Caco-2 (cell line): ENCODE measurements at regions of chr4 and their contacts with region 1.

Region 1: DNA sequence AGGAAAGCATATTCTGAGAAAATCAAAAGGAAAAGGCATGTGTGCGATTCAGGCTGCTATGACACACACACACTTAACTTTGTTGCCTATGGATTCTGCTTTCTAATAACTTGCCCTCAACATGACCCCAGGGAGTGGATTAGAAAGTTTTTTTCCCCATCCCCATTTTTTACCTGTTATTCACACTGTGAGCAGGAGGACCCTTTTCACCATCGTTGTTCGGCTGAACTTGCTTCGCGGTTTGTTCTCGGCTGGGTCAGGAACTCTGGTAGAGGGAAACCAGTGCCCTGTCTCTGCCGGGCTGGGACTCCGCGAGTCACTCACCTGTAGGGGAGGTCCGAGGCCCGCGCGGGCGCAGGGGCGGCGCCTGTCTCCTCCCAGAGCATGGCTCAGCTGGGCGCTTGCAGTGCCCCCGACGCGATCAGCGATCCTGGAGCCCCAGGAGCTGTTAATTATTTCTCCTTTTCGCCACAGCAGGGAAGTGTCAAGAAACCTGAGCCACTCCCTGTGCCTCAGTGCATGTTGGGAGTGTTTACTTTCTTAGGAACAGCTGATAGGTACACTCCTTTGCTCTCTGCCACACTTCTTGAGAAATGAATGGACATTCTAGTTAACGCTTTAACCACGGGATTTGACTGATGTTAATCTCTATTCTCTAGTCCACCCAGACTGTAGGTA is at the start of gene RASSF6:
- DNase-seq: peak; percentile 92 to 94
- H3K4me3 ChIP-seq: peak within 1 kb of the TSS; percentile 54
- H3K4me3 Mint-ChIP-seq: peak within 1 kb of the TSS; percentile 82
- H3K27ac Mint-ChIP-seq: peak within 1 kb of the TSS; percentile 79
- H3K4me1 ChIP-seq: no peaks in the 10 kb centered on the region
- H3K4me1 Mint-ChIP-seq: no peaks in the 10 kb centered on the region
- H3K27me3 ChIP-seq: no peaks in the 10 kb centered on the region
- H3K27me3 Mint-ChIP-seq: no peaks in the 10 kb centered on the region
- CTCF ChIP-seq: peak in 1 of 2 experiments; percentile 6
- total RNA-seq, gene RASSF6: 2.4 and 2.9 TPM in 2 replicates

Region 2: DNA sequence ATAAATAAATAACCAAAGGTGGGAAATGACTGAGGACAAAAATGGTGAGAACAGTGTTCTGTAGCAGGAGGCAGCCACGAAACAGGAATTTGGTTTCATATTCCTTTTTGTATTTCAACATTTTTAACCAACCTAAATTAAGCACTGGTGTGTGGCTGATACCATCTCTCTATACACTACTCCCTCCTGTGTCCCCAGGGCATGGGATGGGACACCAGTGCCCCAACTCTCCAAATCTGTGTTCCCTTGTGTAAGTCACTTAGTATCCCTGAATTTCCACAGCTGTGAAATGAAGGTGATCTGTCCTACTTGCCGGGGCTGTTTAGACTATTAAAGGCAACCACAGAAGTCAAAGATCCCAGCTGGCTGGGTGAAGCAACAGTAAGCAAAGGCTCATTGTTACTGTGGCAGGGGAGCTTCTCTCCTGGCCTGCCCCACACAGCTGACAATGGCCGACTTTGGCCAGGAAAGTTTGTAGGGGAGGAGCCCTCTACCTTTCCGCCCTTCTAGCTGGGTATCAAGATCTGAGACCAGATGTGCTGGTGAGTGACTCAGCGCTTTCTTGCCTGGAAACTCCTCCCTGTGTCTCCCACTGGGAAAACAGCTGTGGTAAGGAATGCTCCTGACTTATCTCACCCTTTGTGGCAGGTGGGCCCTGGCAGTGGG is 21.2 kb before region 1 on chr4:
- CTCF ChIA-PET with region 1: interaction called, 8 read pairs
- POLR2A ChIA-PET with region 1: no interaction called
- intact Hi-C with region 1: loop called (anchors 1 kb)
- DNase-seq: peak; percentile 75 to 88
- H3K4me3 ChIP-seq: no peak overlapping the region
- H3K4me3 Mint-ChIP-seq: no peak overlapping the region
- H3K27ac Mint-ChIP-seq: peak overlapping the region; percentile 76
- H3K4me1 ChIP-seq: peaks cover 47% of the 10 kb centered on the region
- H3K4me1 Mint-ChIP-seq: peaks cover 26% of the 10 kb centered on the region
- H3K27me3 ChIP-seq: no peaks in the 10 kb centered on the region
- H3K27me3 Mint-ChIP-seq: no peaks in the 10 kb centered on the region
- CTCF ChIP-seq: no peak

Region 3: GRCh38 chr4:73606465-73606974 is 13.7 kb before region 1 on chr4:
- CTCF ChIA-PET with region 1: interaction called, 3 read pairs
- POLR2A ChIA-PET with region 1: no interaction called
- intact Hi-C with region 1: loop called (anchors 2 kb)
- DNase-seq: no peak
- H3K4me3 ChIP-seq: no peak overlapping the region
- H3K4me3 Mint-ChIP-seq: no peak overlapping the region
- H3K27ac Mint-ChIP-seq: peak overlapping the region; percentile 55
- H3K4me1 ChIP-seq: peaks cover 42% of the 10 kb centered on the region
- H3K4me1 Mint-ChIP-seq: peaks cover 30% of the 10 kb centered on the region
- H3K27me3 ChIP-seq: no peaks in the 10 kb centered on the region
- H3K27me3 Mint-ChIP-seq: no peaks in the 10 kb centered on the region
- CTCF ChIP-seq: no peak

Region 4: DNA sequence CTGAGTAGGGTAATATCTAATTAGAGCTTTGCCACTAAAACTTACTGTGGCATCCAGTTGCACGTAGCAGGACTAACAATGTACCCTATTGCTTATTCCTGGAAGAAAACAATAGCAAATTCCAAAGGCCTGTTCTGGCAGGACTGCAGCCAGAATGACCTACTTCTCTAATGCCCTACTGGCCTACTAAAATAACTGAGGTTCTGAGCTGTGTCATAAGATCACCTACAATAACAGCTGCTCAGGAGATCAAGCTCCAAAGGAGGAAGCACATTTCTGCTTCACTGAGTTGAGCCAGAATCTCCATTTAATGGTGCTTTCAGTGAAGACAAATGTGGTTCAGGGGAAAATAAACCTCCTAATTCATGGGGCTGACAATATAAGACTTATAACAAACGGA is 78.0 kb after region 1 on chr4:
- CTCF ChIA-PET with region 1: no interaction called
- POLR2A ChIA-PET with region 1: no interaction called
- intact Hi-C with region 1: no loop called
- DNase-seq: no peak
- H3K4me3 ChIP-seq: no peak overlapping the region
- H3K4me3 Mint-ChIP-seq: no peak overlapping the region
- H3K27ac Mint-ChIP-seq: no peak overlapping the region
- H3K4me1 ChIP-seq: no peaks in the 10 kb centered on the region
- H3K4me1 Mint-ChIP-seq: no peaks in the 10 kb centered on the region
- H3K27me3 ChIP-seq: no peaks in the 10 kb centered on the region
- H3K27me3 Mint-ChIP-seq: peaks cover 5% of the 10 kb centered on the region
- CTCF ChIP-seq: no peak